Naive thymus-derived CD4-positive, alpha-beta T cell (primary cell): ENCODE measurements at regions of chr5 and their contacts with region 1.

Region 1: GRCh38 chr5:55307383-55308253 is at the starts of genes DHX29 and MTREX:
- DNase-seq: peak; percentile 85 to 93 (median 91)
- ATAC-seq: peak; percentile 94
- H3K4me3 ChIP-seq: peak within 1 kb of the TSS; percentile 97
- H3K4me3 Mint-ChIP-seq: no peak within 1 kb of the TSS
- H3K27ac ChIP-seq: peak within 1 kb of the TSS; percentile 89
- H3K27ac Mint-ChIP-seq: no peak within 1 kb of the TSS
- H3K4me1 ChIP-seq: peaks cover 28 to 33% of the 10 kb centered on the region in 2 donors
- H3K4me1 Mint-ChIP-seq: peaks cover 15 to 34% (median 21%) of the 10 kb centered on the region in 7 donors
- H3K27me3 ChIP-seq: no peaks in the 10 kb centered on the region
- H3K27me3 Mint-ChIP-seq: no peaks in the 10 kb centered on the region
- total RNA-seq, gene DHX29: 12.5 to 19.2 (median 15.9) TPM
- total RNA-seq, gene MTREX: 64.0 to 83.7 (median 66.3) TPM

Region 2: GRCh38 chr5:54996466-54996865 is 311.2 kb before region 1 on chr5:
- CTCF ChIA-PET with region 1: no interaction called
- POLR2A ChIA-PET with region 1: no interaction called
- intact Hi-C with region 1: no loop called
- DNase-seq: no peak
- ATAC-seq: no peak
- H3K4me3 ChIP-seq: no peak overlapping the region
- H3K4me3 Mint-ChIP-seq: no peak overlapping the region
- H3K27ac ChIP-seq: no peak overlapping the region
- H3K27ac Mint-ChIP-seq: no peak overlapping the region
- H3K4me1 ChIP-seq: peaks cover 0 to 20% of the 10 kb centered on the region in 2 donors
- H3K4me1 Mint-ChIP-seq: peaks cover under 1 to 25% (median 14%) of the 10 kb centered on the region in 7 donors
- H3K27me3 ChIP-seq: no peaks in the 10 kb centered on the region
- H3K27me3 Mint-ChIP-seq: peaks cover 0 to 10% (median 0%) of the 10 kb centered on the region in 5 donors

Region 3: GRCh38 chr5:55226027-55226933 is 81.3 kb before region 1 on chr5:
- CTCF ChIA-PET with region 1: no interaction called
- POLR2A ChIA-PET with region 1: interaction called, 3 read pairs
- intact Hi-C with region 1: loop called in 1 of 2 experiments (anchors 5 kb)
- DNase-seq: peak in 4 of 9 donors; percentile 11 to 62 (median 29)
- ATAC-seq: peak; percentile 54
- H3K4me3 ChIP-seq: peak overlapping the region; percentile 30
- H3K4me3 Mint-ChIP-seq: peak overlapping the region; percentile 59 to 83 (median 70)
- H3K27ac ChIP-seq: no peak overlapping the region
- H3K27ac Mint-ChIP-seq: peak overlapping the region in 1 of 9 donors; percentile 18
- H3K4me1 ChIP-seq: peaks cover 16 to 21% of the 10 kb centered on the region in 2 donors
- H3K4me1 Mint-ChIP-seq: peaks cover 19 to 48% (median 46%) of the 10 kb centered on the region in 7 donors
- H3K27me3 ChIP-seq: peaks cover 21 to 66% of the 10 kb centered on the region in 2 donors
- H3K27me3 Mint-ChIP-seq: peaks cover 79 to 90% (median 86%) of the 10 kb centered on the region in 5 donors

Region 4: DNA sequence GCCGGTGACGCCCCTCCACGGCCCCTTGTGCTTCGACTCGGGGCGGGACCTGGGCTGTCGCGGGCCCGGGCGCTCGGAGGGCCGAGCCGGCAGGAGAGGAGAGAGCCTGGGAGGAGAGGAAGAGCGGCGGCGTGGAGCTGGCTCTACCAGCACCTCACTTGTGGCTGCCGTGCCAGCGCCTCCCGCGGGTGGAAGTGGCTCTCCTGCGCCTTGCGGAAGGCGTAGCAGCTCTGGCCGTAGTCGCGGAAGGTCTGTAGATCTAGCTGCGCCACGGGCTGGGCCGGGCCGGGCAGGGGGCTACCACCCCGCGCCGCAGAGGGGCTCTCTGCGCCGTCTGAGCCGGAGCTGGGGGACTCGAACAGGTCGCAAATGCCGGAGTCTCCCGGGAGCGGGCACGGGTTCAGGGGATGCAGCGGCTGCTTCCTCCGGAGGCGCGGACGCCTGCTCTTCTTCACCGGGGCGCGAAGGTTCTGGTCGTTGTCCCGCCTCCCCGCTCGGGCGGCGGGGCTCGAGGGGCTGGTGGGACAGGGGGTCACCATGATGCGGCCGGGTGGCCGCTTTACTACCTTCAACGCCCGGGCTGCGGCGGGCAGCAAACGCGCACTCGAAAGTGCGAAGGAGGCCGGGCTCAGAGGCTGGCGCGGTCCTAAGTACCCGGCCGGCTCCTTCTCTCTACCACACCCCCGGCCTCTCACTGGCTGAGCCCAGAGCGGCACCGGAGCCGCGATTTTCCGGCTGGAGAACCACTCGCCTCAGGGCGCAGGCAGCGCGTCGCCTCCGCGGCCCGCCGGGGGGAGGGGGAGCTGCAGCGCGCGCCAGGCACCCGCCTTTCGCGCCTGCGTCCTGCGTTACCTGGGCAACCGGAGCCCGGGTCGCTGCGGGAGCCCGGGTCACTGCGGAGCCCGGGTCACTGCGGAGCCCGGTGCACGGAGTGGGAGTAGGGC is 74.4 kb before region 1 on chr5 and contains the start of gene CCNO:
- CTCF ChIA-PET with region 1: no interaction called
- POLR2A ChIA-PET with region 1: interaction called, 3 read pairs
- intact Hi-C with region 1: loop called (anchors 2 to 5 kb)
- DNase-seq: peak in 8 of 9 donors; percentile 30 to 76 (median 50)
- ATAC-seq: peak; percentile 78
- H3K4me3 ChIP-seq: peak within 1 kb of the TSS; percentile 59
- H3K4me3 Mint-ChIP-seq: peak within 1 kb of the TSS; percentile 81 to 94 (median 86)
- H3K27ac ChIP-seq: no peak within 1 kb of the TSS
- H3K27ac Mint-ChIP-seq: peak within 1 kb of the TSS in 3 of 9 donors; percentile 25 to 41 (median 38)
- H3K4me1 ChIP-seq: peaks cover 22 to 27% of the 10 kb centered on the region in 2 donors
- H3K4me1 Mint-ChIP-seq: peaks cover 19 to 46% (median 29%) of the 10 kb centered on the region in 7 donors
- H3K27me3 ChIP-seq: peaks cover 9 to 35% of the 10 kb centered on the region in 2 donors
- H3K27me3 Mint-ChIP-seq: peaks cover 69 to 87% (median 76%) of the 10 kb centered on the region in 5 donors
- total RNA-seq, gene CCNO: not detected

Region 5: GRCh38 chr5:55324815-55325418 is 17.3 kb after region 1 on chr5:
- CTCF ChIA-PET with region 1: interaction called, 5 read pairs
- POLR2A ChIA-PET with region 1: interaction called, 4 read pairs
- intact Hi-C with region 1: loop called in 1 of 2 experiments (anchors 2 kb)
- DNase-seq: peak in 6 of 9 donors; percentile 8 to 54 (median 36)
- ATAC-seq: peak; percentile 77
- H3K4me3 ChIP-seq: no peak overlapping the region
- H3K4me3 Mint-ChIP-seq: no peak overlapping the region
- H3K27ac ChIP-seq: no peak overlapping the region
- H3K27ac Mint-ChIP-seq: peak overlapping the region in 2 of 9 donors; percentile 4 to 34
- H3K4me1 ChIP-seq: peaks cover 0 to 3% of the 10 kb centered on the region in 2 donors
- H3K4me1 Mint-ChIP-seq: peaks cover 8 to 44% (median 35%) of the 10 kb centered on the region in 7 donors
- H3K27me3 ChIP-seq: no peaks in the 10 kb centered on the region
- H3K27me3 Mint-ChIP-seq: no peaks in the 10 kb centered on the region

Region 6: GRCh38 chr5:55601204-55601618 is 293.6 kb after region 1 on chr5:
- CTCF ChIA-PET with region 1: no interaction called
- POLR2A ChIA-PET with region 1: no interaction called
- intact Hi-C with region 1: loop called in 1 of 2 experiments (anchors 5 kb)
- DNase-seq: no peak
- ATAC-seq: no peak
- H3K4me3 ChIP-seq: peak overlapping the region; percentile 27
- H3K4me3 Mint-ChIP-seq: peak overlapping the region; percentile 59 to 86 (median 76)
- H3K27ac ChIP-seq: peak overlapping the region; percentile 44
- H3K27ac Mint-ChIP-seq: peak overlapping the region; percentile 58 to 78 (median 70)
- H3K4me1 ChIP-seq: peaks cover 0 to 21% of the 10 kb centered on the region in 2 donors
- H3K4me1 Mint-ChIP-seq: peaks cover 8 to 49% (median 29%) of the 10 kb centered on the region in 7 donors
- H3K27me3 ChIP-seq: no peaks in the 10 kb centered on the region
- H3K27me3 Mint-ChIP-seq: no peaks in the 10 kb centered on the region

Region 7: DNA sequence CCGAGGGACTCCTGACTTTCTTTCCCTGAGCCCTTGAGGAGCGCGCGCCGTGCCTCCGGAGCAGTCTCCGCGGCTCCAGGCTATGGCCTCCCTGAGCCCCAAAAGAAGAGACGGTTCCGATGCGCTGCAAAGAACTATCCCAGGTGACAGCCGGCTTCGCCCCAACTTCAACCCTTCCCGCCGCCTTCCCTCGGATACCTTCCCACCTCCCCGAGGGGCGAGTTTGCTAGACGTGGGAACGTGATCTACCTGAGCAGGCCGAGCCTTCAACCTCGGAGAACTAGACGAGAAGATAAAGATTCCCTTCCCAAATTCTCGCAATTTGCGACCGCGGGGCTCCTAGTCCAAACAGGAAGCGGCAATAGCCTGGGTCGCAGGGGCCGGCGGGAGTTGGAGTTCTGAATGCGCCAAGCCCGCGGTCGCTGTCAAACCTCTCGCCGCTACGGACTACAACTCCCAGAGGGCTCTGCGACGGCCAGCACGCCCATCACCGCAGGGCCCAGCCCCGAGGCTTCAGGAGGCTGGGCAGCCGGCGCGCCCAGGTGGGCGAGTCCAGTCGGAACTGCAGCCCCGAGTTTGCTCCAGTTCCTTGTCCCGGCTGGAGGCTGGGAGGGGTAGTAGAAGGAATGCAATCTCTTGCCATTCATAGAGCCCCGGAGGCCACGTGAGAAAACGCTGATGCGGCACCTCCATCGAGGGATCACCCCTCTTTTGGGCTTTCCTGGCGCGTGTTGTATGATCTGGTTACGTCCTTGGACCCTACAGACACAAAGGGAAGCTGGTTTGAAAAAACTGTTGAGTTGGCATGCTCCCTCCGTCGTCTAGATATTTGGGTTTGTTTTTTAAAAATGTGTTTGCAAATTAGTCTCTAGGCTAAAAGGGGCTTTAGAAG is 404.6 kb after region 1 on chr5 and contains the start of gene SLC38A9:
- CTCF ChIA-PET with region 1: no interaction called
- POLR2A ChIA-PET with region 1: no interaction called
- intact Hi-C with region 1: loop called (anchors 1 kb)
- DNase-seq: peak; percentile 82 to 91 (median 90)
- ATAC-seq: peak; percentile 100
- H3K4me3 ChIP-seq: peak within 1 kb of the TSS; percentile 87
- H3K4me3 Mint-ChIP-seq: peak within 1 kb of the TSS; percentile 94 to 99 (median 98)
- H3K27ac ChIP-seq: peak within 1 kb of the TSS; percentile 72
- H3K27ac Mint-ChIP-seq: peak within 1 kb of the TSS; percentile 76 to 97 (median 91)
- H3K4me1 ChIP-seq: peaks cover 12 to 16% of the 10 kb centered on the region in 2 donors
- H3K4me1 Mint-ChIP-seq: peaks cover 20 to 40% (median 29%) of the 10 kb centered on the region in 7 donors
- H3K27me3 ChIP-seq: no peaks in the 10 kb centered on the region
- H3K27me3 Mint-ChIP-seq: peaks cover 0 to 3% (median 0%) of the 10 kb centered on the region in 5 donors
- total RNA-seq, gene SLC38A9: 17.7 to 32.6 (median 30.4) TPM

Region 8: DNA sequence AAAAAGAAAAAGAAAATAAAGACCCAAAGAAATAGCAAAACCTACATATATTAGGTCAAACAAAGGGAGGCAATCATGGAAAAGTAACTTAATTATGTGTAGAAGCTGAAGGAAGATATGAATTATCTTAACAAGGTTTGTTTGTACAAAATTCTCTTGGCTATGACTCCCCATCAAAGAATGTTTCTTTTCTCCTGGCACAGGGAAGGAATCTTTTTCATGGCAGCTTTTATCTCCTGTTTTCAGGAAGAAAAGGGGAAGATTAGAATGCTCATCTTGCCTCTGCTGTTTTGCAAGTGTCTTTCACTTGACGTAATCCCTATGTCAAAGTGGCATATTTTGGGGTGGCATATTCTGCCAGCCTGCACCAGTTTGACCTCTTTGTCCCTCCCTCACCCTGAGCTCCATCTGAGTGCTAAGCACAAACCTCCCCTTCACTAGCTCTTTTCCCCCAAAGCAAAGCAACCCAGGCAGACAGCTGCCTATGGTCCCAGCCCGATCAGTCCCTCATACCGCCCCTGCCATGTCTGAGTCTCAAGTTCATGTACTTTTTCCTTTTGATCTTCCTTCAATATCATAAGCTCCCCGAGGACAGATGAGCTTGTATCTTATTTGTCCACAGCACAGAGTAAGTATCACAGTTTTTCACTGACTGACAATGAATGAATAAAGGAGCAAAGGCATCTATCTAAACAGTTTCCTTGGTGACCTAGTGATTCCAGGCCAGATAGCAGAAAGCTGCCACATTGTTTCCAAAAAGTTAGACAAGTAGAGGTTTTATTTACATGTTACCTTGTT is 1168.3 kb after region 1 on chr5:
- CTCF ChIA-PET with region 1: no interaction called
- POLR2A ChIA-PET with region 1: no interaction called
- intact Hi-C with region 1: no loop called
- DNase-seq: no peak
- ATAC-seq: no peak
- H3K4me3 ChIP-seq: no peak overlapping the region
- H3K4me3 Mint-ChIP-seq: no peak overlapping the region
- H3K27ac ChIP-seq: no peak overlapping the region
- H3K27ac Mint-ChIP-seq: peak overlapping the region in 4 of 9 donors; percentile 3 to 34 (median 5)
- H3K4me1 ChIP-seq: peaks cover 0 to 32% of the 10 kb centered on the region in 2 donors
- H3K4me1 Mint-ChIP-seq: peaks cover 21 to 45% (median 37%) of the 10 kb centered on the region in 7 donors
- H3K27me3 ChIP-seq: no peaks in the 10 kb centered on the region
- H3K27me3 Mint-ChIP-seq: no peaks in the 10 kb centered on the region